GM23248 (cell line): ENCODE measurements at regions of chr13 and their contacts with region 1.

Region 1: DNA sequence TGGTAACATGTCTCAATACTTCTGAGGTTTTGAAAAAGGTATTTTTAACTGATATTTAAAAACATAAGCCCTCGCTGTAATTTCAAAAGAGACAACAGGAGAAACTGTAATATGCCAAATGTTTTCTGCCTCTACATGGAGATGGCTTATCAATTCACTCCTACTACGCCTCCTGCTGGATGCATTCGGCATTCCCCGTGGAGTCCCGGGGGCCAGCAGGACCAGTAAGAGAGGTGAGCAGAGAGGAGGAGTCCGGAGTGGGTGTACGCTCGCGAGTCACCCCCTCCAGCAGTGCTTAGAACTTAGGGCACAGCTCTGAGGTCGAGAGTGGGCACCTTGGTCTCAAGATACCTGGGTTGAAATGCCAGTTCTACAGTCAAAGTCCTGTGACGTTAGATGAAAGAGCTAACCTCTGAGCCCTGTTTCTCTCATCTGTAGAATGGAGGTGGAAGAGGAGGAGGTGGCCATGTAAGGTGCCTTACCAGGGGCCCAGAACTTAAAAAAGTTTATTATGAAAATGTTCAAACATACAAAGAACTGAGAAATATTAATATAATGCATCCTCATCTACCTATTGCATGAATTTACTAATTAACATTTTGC is 110.2 kb downstream of the STK24 start:
- DNase-seq: peak; percentile 72
- H3K4me3 ChIP-seq: no peak overlapping the region
- H3K27ac ChIP-seq: no peak overlapping the region
- H3K4me1 ChIP-seq: peaks cover 6% of the 10 kb centered on the region
- H3K27me3 ChIP-seq: no peaks in the 10 kb centered on the region

Region 2: GRCh38 chr13:98653463-98653985 is 186.8 kb after region 1 on chr13:
- in situ Hi-C with region 1: loop called (anchors 10 kb)
- DNase-seq: peak; percentile 86
- H3K4me3 ChIP-seq: no peak overlapping the region
- H3K27ac ChIP-seq: no peak overlapping the region
- H3K4me1 ChIP-seq: peaks cover 7% of the 10 kb centered on the region
- H3K27me3 ChIP-seq: no peaks in the 10 kb centered on the region

Region 3: DNA sequence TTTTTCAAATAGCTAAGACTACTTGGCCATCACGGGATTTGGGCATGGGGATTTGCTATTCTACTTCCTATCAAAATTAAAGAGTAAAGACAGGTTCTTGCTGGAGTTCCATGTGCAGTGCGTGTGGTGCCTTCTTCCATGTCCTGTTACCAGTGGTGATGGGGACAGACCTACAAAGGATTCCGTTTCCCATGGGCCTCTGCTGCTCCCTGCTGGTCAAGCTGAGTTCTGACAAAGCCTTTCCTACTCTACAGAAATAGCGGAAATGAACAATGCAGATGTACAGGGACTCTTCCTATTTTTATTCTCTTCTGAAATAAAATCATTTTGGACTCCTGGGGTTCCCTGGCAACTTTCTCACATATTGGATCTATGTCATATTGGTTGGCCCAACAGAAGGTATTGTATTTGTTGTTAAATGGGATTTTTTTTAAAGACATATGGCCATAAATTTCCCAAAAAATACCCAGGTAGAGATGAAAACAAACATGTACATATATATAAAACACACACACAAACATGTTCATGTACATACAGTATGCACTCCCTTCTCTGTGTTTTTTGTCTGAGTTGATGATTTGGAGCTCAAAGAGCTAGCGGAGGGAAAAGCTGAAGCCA is 376.2 kb after region 1 on chr13:
- in situ Hi-C with region 1: loop called (anchors 25 kb)
- DNase-seq: peak; percentile 84
- H3K4me3 ChIP-seq: no peak overlapping the region
- H3K27ac ChIP-seq: no peak overlapping the region
- H3K4me1 ChIP-seq: peaks cover 17% of the 10 kb centered on the region
- H3K27me3 ChIP-seq: no peaks in the 10 kb centered on the region